ENCODE measurements at regions of chr3 and their contacts with region 1.

Region 1: DNA sequence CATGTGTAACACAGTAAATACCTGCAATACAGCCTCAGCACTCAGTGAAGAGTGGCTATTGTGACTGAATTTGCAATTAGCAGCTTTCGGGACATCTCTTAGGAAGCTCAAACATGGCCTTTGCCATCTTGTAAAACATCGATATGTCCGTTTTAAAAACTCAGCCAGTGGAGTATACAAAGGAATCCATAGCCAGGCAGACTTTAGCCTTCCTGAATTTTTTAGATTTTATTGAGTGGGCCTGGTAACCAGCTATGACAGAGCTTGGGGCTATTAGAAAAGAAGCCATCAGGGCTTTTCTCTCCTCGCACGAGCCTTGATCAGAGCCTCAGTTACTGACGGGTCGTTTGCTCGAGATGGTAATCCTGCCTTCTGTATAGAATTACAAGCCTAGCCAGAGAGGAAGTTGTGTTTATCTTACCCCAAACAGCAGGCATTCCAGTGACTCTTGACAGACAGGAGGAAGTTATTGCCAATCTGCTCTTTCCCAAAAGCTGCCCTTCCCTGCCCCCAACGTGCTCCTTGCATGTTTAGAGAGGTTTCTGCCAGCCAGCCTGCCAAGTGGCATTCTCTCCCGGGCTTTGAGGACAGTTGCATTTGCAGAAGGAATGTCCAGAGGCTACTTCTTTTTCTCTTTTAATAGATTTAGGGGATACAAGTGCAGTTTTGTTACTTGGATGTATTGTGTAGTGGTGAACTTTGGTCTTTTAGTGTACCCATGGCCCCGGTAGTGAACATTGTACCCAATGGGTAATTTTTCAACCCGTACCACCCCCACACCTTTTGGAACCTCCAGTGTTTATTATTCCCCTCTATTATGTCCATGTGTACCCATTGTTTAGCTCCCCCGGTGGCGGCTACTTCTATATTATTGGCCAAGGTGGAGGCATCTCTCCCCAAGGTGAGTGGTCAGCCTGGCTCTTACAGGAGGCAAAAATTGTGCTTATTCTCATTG is 40.6 kb downstream of the ITPR1 start:
- DNase-seq: peak; percentile 45 to 90 (median 67)
- ATAC-seq: peak; percentile 84
- H3K4me3 ChIP-seq: no peak overlapping the region
- H3K27ac ChIP-seq: peak overlapping the region; percentile 75
- H3K4me1 ChIP-seq: peaks cover 28 to 43% of the 10 kb centered on the region in 2 experiments
- H3K27me3 ChIP-seq: no peaks in the 10 kb centered on the region
- CTCF ChIP-seq: peak; percentile 1 to 30 (median 21); a peak in 1 of 6 replicates
- EP300 ChIP-seq: peak; percentile 99
- POLR2A ChIP-seq: no peak
- RAD21 ChIP-seq: peak in 1 of 2 experiments; percentile 43; a peak in 2 of 4 replicates

Region 2: GRCh38 chr3:4426601-4427344 is 107.0 kb before region 1 on chr3:
- CTCF ChIA-PET with region 1: no interaction called
- POLR2A ChIA-PET with region 1: no interaction called
- in situ Hi-C with region 1: no loop called
- intact Hi-C with region 1: no loop called
- DNase-seq: peak in 2 of 4 experiments; percentile 40 to 49
- ATAC-seq: peak; percentile 69
- H3K4me3 ChIP-seq: no peak overlapping the region
- H3K27ac ChIP-seq: no peak overlapping the region
- H3K4me1 ChIP-seq: peaks cover 0 to 7% of the 10 kb centered on the region in 2 experiments; a peak in 2 of 5 replicates
- H3K27me3 ChIP-seq: no peaks in the 10 kb centered on the region
- CTCF ChIP-seq: no peak
- EP300 ChIP-seq: no peak
- POLR2A ChIP-seq: no peak
- RAD21 ChIP-seq: no peak

Region 3: GRCh38 chr3:4504340-4505261 is 29.2 kb before region 1 on chr3:
- CTCF ChIA-PET with region 1: no interaction called
- POLR2A ChIA-PET with region 1: interaction called, 16 read pairs
- in situ Hi-C with region 1: no loop called
- intact Hi-C with region 1: loop called (anchors 1 kb)
- DNase-seq: no peak
- ATAC-seq: no peak
- H3K4me3 ChIP-seq: no peak overlapping the region
- H3K27ac ChIP-seq: no peak overlapping the region
- H3K4me1 ChIP-seq: peaks cover 15 to 55% of the 10 kb centered on the region in 2 experiments
- H3K27me3 ChIP-seq: no peaks in the 10 kb centered on the region
- CTCF ChIP-seq: no peak
- EP300 ChIP-seq: no peak
- POLR2A ChIP-seq: no peak
- RAD21 ChIP-seq: 0 out of 4 replicates have a peak, but pooled peaks of 1 of the 2 experiments have one; percentile 11

Region 4: GRCh38 chr3:4512895-4513616 is 20.7 kb before region 1 on chr3:
- CTCF ChIA-PET with region 1: no interaction called
- POLR2A ChIA-PET with region 1: interaction called, 35 read pairs
- in situ Hi-C with region 1: no loop called
- intact Hi-C with region 1: no loop called
- DNase-seq: peak; percentile 40 to 71 (median 56)
- ATAC-seq: peak; percentile 74
- H3K4me3 ChIP-seq: no peak overlapping the region
- H3K27ac ChIP-seq: no peak overlapping the region
- H3K4me1 ChIP-seq: peaks cover 10 to 46% of the 10 kb centered on the region in 2 experiments; a peak in 4 of 5 replicates
- H3K27me3 ChIP-seq: no peaks in the 10 kb centered on the region
- CTCF ChIP-seq: no peak
- EP300 ChIP-seq: no peak
- POLR2A ChIP-seq: no peak
- RAD21 ChIP-seq: peak in 1 of 2 experiments; percentile 32; a peak in 1 of 4 replicates

Region 5: DNA sequence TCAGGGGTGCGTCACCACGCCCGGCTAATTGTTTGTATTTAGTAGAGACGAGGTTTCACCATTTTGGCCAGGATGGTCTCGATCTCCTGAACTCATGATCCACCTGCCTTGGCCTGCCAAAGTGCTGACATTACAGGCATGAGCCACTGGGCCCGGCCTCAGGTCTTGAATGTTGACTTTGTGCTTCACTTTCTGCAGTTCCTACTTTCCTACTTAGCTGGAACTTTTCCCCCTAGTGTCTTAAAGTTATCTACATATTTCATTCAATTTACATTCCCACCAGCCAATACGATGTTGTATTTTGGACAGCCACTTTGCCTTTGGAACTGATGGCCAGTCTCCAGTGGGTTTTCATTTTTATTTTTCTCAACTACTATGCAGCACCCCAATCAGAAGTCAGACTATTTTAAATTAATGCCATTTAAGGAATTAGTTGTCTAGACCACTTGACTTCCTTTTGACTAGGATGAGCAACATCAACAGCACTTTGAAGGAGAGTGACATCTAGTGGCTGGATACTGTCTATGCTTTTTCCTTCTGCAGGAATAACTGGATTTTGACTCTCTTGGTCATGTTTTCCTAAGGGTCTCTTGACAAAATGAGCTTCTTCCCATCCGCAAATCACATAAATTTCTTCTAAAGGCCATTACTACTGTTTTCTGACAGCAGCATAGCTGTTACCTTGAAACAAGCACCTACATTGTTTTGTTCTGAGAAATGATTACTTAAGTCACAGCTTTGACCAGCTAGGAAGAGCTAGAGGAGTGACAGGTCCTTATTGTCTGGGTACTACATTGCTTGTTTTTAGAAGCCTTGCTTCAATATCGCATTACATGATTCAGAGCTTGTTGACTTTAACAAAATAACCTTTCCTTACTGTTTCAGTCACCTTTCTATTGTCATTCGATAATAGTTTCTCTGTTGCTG is 99.6 kb after region 1 on chr3:
- CTCF ChIA-PET with region 1: no interaction called
- POLR2A ChIA-PET with region 1: no interaction called
- in situ Hi-C with region 1: no loop called
- intact Hi-C with region 1: loop called (anchors 5 kb)
- DNase-seq: peak; percentile 32 to 73 (median 54)
- ATAC-seq: peak; percentile 86
- H3K4me3 ChIP-seq: no peak overlapping the region
- H3K27ac ChIP-seq: no peak overlapping the region
- H3K4me1 ChIP-seq: peaks cover 2 to 4% of the 10 kb centered on the region in 2 experiments; a peak in 3 of 5 replicates
- H3K27me3 ChIP-seq: no peaks in the 10 kb centered on the region
- CTCF ChIP-seq: peak; percentile 77 to 97 (median 91)
- EP300 ChIP-seq: no peak
- POLR2A ChIP-seq: no peak
- RAD21 ChIP-seq: peak; percentile 96 to 97

Region 6: DNA sequence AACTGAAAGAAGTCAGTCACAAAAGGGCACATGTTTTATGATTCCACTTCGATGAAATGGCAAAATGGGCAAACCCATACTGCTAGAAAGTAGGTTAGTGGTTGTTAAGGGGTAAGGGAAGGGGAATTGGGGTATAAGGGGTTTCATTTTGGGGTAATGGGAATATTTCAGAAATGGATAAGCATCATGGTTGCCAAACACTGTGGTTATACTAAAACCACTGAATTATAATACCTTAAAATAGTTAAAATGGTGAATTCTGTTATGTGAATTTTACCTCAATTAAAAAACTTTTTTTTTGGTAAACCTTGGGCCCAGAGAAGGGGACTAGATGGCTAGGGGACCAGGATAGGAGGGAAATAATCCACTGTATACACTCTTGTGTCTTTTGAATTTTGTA is 393.1 kb after region 1 on chr3:
- CTCF ChIA-PET with region 1: no interaction called
- POLR2A ChIA-PET with region 1: no interaction called
- in situ Hi-C with region 1: no loop called
- intact Hi-C with region 1: no loop called
- DNase-seq: no peak
- ATAC-seq: no peak
- H3K4me3 ChIP-seq: no peak overlapping the region
- H3K27ac ChIP-seq: no peak overlapping the region
- H3K4me1 ChIP-seq: no peaks in the 10 kb centered on the region
- H3K27me3 ChIP-seq: no peaks in the 10 kb centered on the region
- CTCF ChIP-seq: no peak
- EP300 ChIP-seq: no peak
- POLR2A ChIP-seq: no peak
- RAD21 ChIP-seq: no peak

Region 7: DNA sequence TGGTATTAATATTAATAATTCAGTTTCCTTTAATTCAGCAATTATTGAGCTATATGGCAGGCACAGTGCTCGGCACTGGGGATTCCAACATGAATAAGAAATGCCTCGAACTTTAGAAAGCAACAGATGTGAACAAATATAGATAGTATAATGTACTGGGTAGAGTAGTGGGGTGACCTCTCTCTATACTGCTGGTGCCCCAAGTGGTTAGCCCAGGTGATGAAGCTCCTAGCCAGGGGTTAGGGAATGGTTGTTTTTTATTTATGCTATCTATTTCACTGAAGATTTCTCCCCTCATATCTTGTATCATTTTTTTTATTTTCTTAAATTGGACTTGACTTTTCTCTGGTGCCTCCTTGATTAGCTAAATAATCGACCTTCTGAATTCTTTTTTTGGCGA is 507.5 kb after region 1 on chr3:
- CTCF ChIA-PET with region 1: no interaction called
- POLR2A ChIA-PET with region 1: no interaction called
- in situ Hi-C with region 1: no loop called
- intact Hi-C with region 1: no loop called
- DNase-seq: peak in 2 of 4 experiments; percentile 45 to 52
- ATAC-seq: peak; percentile 73
- H3K4me3 ChIP-seq: no peak overlapping the region
- H3K27ac ChIP-seq: no peak overlapping the region
- H3K4me1 ChIP-seq: peaks cover 8 to 37% of the 10 kb centered on the region in 2 experiments
- H3K27me3 ChIP-seq: no peaks in the 10 kb centered on the region
- CTCF ChIP-seq: peak; percentile 42 to 53 (median 52); a peak in 5 of 6 replicates
- EP300 ChIP-seq: no peak
- POLR2A ChIP-seq: no peak
- RAD21 ChIP-seq: peak; percentile 30 to 44

Measured in K562 (cell line).